ENCODE measurements at regions of chr6 and their contacts with region 1.

Region 1: DNA sequence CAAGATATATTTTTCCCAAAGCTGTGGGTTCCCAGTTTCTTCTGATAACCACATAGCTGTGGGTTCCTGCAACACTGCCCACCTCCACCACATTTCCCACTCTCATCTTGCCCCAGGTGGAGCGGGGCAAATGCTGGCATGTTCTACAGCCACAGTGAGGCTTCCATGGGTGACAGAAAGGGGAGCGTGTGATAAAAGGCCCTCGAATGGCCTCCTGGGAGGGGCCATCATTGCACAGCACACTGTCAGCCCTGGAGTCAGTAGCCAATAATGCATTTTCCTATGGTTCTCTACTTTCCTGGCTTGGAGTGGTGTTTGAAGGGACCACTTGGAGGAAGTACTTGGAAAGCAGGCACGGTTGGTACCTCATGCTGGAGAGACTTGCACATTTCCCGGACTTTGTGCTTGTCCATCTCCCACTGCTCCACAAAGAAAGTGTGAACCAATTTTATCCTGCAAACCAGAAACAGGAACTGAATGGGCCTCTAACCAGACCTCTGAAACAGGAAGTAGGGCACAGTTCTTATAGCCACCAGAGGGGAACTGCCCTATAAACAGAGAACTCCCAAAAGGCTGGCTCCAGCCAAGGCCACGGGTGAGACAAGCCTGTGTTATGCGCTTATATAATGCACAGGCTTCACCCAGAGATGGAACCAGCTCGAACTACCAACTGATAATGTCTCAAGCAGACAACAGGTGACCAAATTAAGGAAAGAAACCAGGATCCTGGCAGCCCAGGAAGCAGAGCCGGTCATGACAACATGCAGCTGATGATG is 8.6 kb downstream of the MAP3K5 start:
- DNase-seq: no peak
- ATAC-seq: peak; percentile 75
- H3K4me3 ChIP-seq: peak overlapping the region; percentile 76
- H3K27ac ChIP-seq: peak overlapping the region; percentile 92
- H3K4me1 ChIP-seq: peaks cover 27% of the 10 kb centered on the region
- H3K27me3 ChIP-seq: no peaks in the 10 kb centered on the region
- CTCF ChIP-seq: peak in 2 of 3 experiments; percentile 18 to 34; a peak in 1 of 6 replicates
- EP300 ChIP-seq: peak in 1 of 2 experiments; percentile 59; a peak in 1 of 4 replicates
- POLR2A ChIP-seq: peak; percentile 33; the same call in 1 of the 2 replicates
- RAD21 ChIP-seq: no peak

Region 2: GRCh38 chr6:136737871-136738691 is 45.6 kb before region 1 on chr6:
- CTCF ChIA-PET with region 1: interaction called, 5 read pairs
- POLR2A ChIA-PET with region 1: interaction called, 4 read pairs
- RAD21 ChIA-PET with region 1: interaction called, 56 read pairs
- SMC1A ChIA-PET with region 1: interaction called, 48 read pairs
- in situ Hi-C with region 1: no loop called
- intact Hi-C with region 1: no loop called
- DNase-seq: no peak
- ATAC-seq: no peak
- H3K4me3 ChIP-seq: no peak overlapping the region
- H3K27ac ChIP-seq: no peak overlapping the region
- H3K4me1 ChIP-seq: peaks cover 7% of the 10 kb centered on the region; the same call in 1 of the 2 replicates
- H3K27me3 ChIP-seq: no peaks in the 10 kb centered on the region
- CTCF ChIP-seq: no peak
- EP300 ChIP-seq: no peak
- POLR2A ChIP-seq: no peak
- RAD21 ChIP-seq: no peak

Region 3: GRCh38 chr6:136751522-136751956 is 32.1 kb before region 1 on chr6:
- CTCF ChIA-PET with region 1: interaction called, 10 read pairs
- POLR2A ChIA-PET with region 1: interaction called, 11 read pairs
- RAD21 ChIA-PET with region 1: interaction called, 18 read pairs
- SMC1A ChIA-PET with region 1: interaction called, 19 read pairs
- in situ Hi-C with region 1: no loop called
- intact Hi-C with region 1: no loop called
- DNase-seq: peak; percentile 94
- ATAC-seq: peak; percentile 93
- H3K4me3 ChIP-seq: peak overlapping the region; percentile 31; the same call in 1 of the 2 replicates
- H3K27ac ChIP-seq: peak overlapping the region; percentile 93
- H3K4me1 ChIP-seq: peaks cover 48% of the 10 kb centered on the region
- H3K27me3 ChIP-seq: no peaks in the 10 kb centered on the region
- CTCF ChIP-seq: no peak
- EP300 ChIP-seq: peak; percentile 21 to 70; a peak in 3 of 4 replicates
- POLR2A ChIP-seq: no peak
- RAD21 ChIP-seq: 0 out of 2 replicates have a peak, but pooled peaks have one; percentile 28

Region 4: DNA sequence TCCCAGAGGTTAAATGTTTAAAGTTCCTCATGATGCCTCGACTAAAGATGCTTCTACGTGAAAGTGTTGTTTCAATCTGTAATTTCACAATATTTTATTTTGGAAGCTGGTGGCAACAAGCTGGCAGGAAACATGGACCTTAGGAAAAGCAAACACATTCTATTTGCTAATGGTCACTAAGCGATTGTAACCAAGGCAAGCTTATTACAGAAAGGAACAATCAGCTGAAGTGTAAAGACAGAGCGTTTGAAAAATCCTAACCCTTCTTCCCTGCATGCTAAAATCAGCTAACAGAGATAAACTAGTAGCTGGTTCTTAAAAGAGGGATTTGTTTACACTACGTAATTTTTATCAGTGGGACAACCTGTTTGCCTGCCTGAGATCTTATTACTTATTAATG is 211.1 kb after region 1 on chr6:
- CTCF ChIA-PET with region 1: no interaction called
- POLR2A ChIA-PET with region 1: no interaction called
- RAD21 ChIA-PET with region 1: no interaction called
- SMC1A ChIA-PET with region 1: no interaction called
- in situ Hi-C with region 1: no loop called
- intact Hi-C with region 1: no loop called
- DNase-seq: no peak
- ATAC-seq: no peak
- H3K4me3 ChIP-seq: no peak overlapping the region
- H3K27ac ChIP-seq: no peak overlapping the region
- H3K4me1 ChIP-seq: no peaks in the 10 kb centered on the region
- H3K27me3 ChIP-seq: peaks cover 0 to 22% of the 10 kb centered on the region in 2 experiments
- CTCF ChIP-seq: no peak
- EP300 ChIP-seq: no peak
- POLR2A ChIP-seq: no peak
- RAD21 ChIP-seq: no peak

Region 5: DNA sequence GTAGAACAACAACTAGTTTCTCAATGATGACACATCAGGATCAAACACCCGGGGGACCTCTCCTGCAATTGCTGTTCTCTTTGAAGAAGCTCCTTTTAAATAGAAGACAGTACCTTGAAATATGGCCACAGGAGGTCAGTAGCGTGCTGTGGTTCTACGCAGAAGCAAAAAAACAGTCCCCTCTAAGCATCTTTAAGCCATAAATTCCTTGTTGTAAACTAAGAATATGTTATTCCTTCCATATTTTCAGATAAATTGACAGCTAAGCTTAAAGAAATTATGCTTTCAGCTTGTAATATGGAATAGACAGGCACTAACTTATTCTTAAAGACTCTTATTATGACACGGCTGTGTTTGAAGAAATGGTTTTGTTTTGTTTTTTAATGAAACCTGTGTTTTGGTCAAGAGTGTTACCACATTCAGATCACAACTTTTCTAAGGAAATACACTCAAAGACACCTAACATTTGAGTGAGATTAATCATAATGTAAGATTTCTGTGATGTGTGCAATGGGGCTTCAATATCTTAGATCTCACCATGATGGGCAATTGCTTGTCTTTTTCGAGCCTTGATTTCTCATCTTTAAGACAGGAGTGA is 310.8 kb after region 1 on chr6:
- CTCF ChIA-PET with region 1: no interaction called
- POLR2A ChIA-PET with region 1: no interaction called
- RAD21 ChIA-PET with region 1: no interaction called
- SMC1A ChIA-PET with region 1: no interaction called
- in situ Hi-C with region 1: no loop called
- intact Hi-C with region 1: no loop called
- DNase-seq: peak; percentile 91
- ATAC-seq: peak; percentile 58
- H3K4me3 ChIP-seq: 0 out of 2 replicates have a peak overlapping the region, but pooled peaks have one; percentile 0
- H3K27ac ChIP-seq: peak overlapping the region; percentile 95
- H3K4me1 ChIP-seq: peaks cover 55% of the 10 kb centered on the region
- H3K27me3 ChIP-seq: no peaks in the 10 kb centered on the region
- CTCF ChIP-seq: peak; percentile 70 to 87 (median 76)
- EP300 ChIP-seq: peak in 1 of 2 experiments; percentile 32; a peak in 1 of 4 replicates
- POLR2A ChIP-seq: no peak
- RAD21 ChIP-seq: peak; percentile 93